GM10248 (cell line): ENCODE measurements at regions of chr2 and their contacts with region 1.

Region 1: DNA sequence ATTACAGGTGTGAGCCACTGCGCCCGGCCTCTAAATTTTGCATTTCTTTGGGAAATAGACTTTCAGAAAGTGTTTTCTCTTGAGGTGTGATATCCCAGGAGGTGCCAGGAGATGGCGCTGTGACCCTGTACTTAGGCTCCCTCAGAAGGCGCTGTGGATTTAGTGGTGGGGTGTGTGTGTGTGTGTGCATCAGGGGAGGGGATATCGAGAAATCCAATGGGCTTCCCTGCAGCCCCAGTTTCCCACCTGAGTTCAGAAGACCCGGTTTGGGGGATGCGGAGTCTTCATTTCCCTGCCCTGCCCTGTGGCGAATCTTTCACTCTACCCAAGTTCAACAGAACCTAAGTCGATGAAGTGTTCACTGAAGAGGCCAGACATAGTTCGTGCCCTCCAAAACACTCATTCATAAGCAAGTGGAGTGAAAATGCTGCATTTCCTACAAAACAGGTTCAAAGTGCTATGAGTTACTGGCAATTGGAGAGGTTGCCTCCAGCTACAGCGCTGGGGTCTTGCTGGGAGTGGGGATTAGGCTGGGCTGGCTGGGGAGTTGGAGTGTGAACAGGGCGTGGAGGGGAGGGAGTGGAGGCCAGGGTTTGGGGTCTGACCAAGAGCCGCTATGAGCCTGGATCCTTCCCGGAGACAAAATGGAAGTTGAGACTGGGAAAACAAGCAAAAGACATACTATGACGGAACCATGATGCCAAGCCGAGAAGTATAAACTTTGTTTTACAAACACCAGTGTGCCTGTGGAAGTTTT is 6.5 kb upstream of the WNT6 start:
- DNase-seq: peak; percentile 65
- CTCF ChIP-seq: peak; percentile 88

Region 2: DNA sequence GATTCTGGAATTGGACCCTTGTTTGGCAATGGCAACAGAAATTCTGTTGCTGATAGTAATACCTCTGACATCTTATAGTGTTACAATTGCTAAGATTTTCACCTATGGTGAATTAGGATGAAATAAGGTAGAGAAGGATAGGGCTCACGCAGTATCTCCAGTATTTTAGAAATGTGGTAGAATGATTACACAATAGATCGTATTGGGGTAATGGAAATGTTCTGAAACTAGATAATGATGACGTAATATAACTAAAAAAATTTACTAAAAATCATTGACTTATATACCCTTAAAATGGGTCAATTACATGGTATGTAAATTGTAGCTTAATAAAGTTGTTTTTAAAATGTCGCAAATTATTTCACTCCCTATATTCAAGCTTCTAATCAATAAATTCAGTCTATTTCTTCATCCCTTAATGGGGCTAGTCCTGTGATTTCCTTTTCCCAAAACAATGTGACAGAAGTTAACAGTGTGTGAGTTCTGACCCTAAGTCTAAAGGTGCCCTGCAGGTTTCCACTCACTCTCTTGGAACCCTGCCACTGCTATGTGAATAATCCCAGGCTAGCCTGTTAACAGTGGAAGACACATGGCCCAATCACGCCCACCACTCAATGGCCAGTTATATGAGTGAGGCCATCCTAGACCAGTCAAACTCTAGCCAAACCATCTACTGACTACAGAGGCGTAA is 316.1 kb before region 1 on chr2:
- CTCF ChIA-PET with region 1: no interaction called
- POLR2A ChIA-PET with region 1: no interaction called
- DNase-seq: no peak
- CTCF ChIP-seq: no peak

Region 3: GRCh38 chr2:218648088-218648786 is 204.9 kb before region 1 on chr2:
- CTCF ChIA-PET with region 1: interaction called, 29 read pairs
- POLR2A ChIA-PET with region 1: no interaction called
- DNase-seq: peak; percentile 69
- CTCF ChIP-seq: peak; percentile 79

Region 4: GRCh38 chr2:218691234-218691633 is 161.9 kb before region 1 on chr2:
- CTCF ChIA-PET with region 1: interaction called, 10 read pairs
- POLR2A ChIA-PET with region 1: no interaction called
- DNase-seq: no peak
- CTCF ChIP-seq: no peak

Region 5: GRCh38 chr2:218820746-218821369 is 32.2 kb before region 1 on chr2:
- CTCF ChIA-PET with region 1: interaction called, 13 read pairs
- POLR2A ChIA-PET with region 1: no interaction called
- DNase-seq: no peak
- CTCF ChIP-seq: no peak

Region 6: DNA sequence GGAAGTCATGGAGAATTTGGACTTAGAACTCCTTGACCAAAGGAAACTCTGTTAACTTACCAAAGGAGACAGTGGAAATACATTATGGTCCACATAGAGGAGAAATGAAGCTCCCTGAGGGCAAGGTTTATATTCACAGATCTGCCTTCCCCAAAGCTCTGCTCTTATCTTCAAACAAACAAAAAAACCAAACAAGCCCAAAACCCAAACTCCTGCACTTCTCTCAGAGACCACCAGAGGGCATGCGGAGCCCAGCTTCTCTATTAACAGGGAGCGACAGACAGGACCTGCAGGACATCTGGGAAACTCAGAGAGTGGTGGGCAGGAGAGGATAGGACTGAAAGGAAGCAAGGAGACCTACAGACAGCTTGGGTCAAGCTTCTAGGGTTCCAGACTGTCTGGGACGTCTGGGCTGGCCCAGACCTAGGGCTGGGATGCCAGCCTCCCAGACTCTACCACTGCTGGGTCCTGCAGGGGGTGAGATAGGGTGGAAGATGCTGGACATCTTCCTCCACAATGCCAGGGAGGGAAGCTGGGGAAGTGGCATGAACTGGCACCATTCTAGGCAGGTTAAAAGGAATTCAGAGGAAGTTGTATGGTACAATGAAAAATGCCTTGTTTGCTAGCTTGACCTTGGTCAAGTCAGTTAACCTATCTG is 23.6 kb after region 1 on chr2:
- CTCF ChIA-PET with region 1: interaction called, 42 read pairs
- POLR2A ChIA-PET with region 1: no interaction called
- DNase-seq: peak; percentile 69
- CTCF ChIP-seq: peak; percentile 95

Region 7: DNA sequence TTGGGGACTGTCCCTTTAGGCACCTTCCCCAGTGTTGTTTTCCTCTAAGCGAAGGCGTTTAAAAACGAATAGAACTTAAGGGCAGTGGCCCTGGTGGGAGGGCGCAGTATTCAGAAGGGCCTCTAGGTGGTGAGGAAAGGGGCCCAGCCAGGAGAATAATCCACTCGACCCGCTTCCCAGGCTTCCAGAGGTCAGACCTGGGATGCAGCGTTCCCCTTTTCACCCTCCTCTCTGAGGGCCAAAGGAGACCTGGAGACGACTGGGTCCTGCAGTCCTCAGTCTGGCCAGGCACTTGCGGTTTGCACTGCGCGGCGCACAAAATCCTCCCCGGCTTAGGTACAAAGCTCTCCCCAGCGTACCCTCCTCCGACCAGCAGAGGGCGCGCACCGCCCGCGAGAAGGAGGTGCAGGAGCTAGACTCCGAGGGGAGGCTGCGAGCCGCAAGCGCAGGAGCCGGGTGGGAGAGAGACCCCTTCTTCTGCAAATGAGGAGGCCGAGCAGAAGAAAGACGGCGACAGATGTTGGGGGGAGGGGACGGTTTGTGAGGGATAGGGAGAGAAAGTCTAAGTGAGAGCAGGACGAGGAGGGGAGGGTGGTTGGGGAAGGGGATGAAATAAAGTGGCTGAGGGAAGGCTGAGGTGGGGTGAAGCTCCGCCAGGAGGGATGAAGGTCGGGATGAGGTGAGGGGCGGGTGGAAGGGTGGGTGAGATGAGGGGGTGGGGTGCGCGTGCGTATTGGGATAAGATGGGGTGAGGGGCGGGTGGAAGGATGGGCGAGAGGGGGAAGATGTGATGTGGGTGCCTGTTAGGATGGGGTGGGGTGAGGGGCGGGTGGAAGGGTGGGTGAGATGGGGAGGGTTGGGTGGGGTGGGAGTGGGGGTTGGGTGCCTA is 127.0 kb after region 1 on chr2:
- CTCF ChIA-PET with region 1: interaction called, 15 read pairs
- POLR2A ChIA-PET with region 1: no interaction called
- DNase-seq: peak; percentile 86
- CTCF ChIP-seq: peak; percentile 98